ENCODE measurements at regions of chr18 and their contacts with region 1.

Region 1: GRCh38 chr18:35972197-35973052 is at the start of gene RMP24:
- ATAC-seq: peak; percentile 78 to 97 (median 94)
- H3K4me3 ChIP-seq: peak within 1 kb of the TSS; percentile 60 to 94 (median 79)
- H3K27ac ChIP-seq: peak within 1 kb of the TSS; percentile 76 to 84
- H3K4me1 ChIP-seq: peaks cover 8 to 13% of the 10 kb centered on the region in 2 donors

Region 2: DNA sequence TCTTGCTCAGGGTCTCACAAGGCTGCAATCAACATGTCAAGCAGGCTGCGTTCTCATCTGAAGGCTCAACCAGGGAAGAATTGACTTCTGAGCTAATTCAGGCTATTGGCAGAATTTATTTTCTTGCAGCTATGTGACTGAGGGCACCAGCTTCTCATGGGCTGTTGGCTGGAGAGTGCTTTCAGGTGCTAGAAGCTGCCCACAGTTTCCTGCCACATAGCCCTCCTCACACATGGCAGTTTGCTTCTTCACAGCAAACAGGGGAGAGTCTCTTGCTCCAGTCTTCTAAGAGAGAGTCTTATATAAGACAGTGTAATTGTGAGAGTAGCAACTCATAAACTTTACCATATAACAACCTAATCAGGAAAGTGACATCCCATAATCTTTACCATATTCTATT is 437.1 kb before region 1 on chr18:
- in situ Hi-C with region 1: no loop called
- ATAC-seq: no peak
- H3K4me3 ChIP-seq: no peak overlapping the region
- H3K27ac ChIP-seq: no peak overlapping the region
- H3K4me1 ChIP-seq: no peaks in the 10 kb centered on the region

Region 3: GRCh38 chr18:35602193-35602820 is 370.1 kb before region 1 on chr18:
- in situ Hi-C with region 1: no loop called
- ATAC-seq: no peak
- H3K4me3 ChIP-seq: no peak overlapping the region
- H3K27ac ChIP-seq: no peak overlapping the region
- H3K4me1 ChIP-seq: no peaks in the 10 kb centered on the region

Region 4: DNA sequence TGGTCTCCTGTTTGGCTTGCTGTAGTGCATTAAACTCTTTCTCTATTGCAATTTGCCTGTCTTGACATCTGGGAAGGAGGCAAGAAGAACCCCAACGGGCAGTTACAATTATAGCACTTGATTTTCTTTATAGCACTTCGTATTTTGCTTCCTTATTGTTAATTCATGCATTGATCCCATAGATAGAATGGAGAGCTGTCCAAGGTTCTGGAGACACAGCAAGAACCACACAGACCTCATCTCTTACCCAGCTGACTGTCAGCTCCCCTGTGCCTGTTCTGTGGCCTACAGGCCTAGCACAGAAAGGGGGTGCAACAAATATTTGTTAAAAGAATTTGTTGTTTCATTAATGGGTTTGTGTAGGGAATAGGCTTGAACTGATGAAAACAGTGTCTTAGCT is 196.5 kb before region 1 on chr18:
- in situ Hi-C with region 1: loop called in 5 of 9 experiments (anchors 25 kb)
- ATAC-seq: peak in 4 of 8 experiments; percentile 21 to 50 (median 30)
- H3K4me3 ChIP-seq: no peak overlapping the region
- H3K27ac ChIP-seq: no peak overlapping the region
- H3K4me1 ChIP-seq: no peaks in the 10 kb centered on the region

Region 5: DNA sequence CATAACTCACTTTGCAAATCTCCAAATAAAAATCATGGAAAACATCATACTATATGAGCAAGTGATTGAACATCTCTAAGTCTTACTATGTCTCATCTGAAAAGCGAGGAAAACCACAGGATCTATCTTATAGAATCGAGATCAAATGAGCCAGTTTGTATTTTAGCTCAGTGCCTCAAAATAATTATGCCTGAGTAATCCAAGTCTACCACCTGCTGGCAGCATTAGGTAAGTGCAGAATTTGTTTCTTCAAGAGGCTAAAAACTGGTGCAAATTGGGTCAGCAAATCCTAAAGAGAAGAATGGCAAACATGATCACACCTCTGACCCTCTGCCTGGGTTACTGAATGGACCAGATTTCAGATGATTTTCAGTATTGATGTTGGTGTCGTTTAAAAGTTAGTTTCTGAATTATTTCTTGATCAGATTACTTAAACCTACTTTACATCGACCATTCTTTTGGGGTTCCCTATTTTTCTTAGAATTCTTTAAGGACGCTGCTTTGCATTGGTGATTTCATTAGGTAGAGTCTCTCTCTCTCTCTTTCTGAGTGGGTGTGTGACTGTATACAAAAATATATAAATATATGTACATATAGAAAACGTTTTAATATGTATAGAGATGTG is 312.4 kb after region 1 on chr18:
- in situ Hi-C with region 1: no loop called
- ATAC-seq: peak in 6 of 8 experiments; percentile 21 to 75 (median 35)
- H3K4me3 ChIP-seq: no peak overlapping the region
- H3K27ac ChIP-seq: no peak overlapping the region
- H3K4me1 ChIP-seq: no peaks in the 10 kb centered on the region